ENCODE measurements at regions of chr2 and their contacts with region 1.

Region 1: DNA sequence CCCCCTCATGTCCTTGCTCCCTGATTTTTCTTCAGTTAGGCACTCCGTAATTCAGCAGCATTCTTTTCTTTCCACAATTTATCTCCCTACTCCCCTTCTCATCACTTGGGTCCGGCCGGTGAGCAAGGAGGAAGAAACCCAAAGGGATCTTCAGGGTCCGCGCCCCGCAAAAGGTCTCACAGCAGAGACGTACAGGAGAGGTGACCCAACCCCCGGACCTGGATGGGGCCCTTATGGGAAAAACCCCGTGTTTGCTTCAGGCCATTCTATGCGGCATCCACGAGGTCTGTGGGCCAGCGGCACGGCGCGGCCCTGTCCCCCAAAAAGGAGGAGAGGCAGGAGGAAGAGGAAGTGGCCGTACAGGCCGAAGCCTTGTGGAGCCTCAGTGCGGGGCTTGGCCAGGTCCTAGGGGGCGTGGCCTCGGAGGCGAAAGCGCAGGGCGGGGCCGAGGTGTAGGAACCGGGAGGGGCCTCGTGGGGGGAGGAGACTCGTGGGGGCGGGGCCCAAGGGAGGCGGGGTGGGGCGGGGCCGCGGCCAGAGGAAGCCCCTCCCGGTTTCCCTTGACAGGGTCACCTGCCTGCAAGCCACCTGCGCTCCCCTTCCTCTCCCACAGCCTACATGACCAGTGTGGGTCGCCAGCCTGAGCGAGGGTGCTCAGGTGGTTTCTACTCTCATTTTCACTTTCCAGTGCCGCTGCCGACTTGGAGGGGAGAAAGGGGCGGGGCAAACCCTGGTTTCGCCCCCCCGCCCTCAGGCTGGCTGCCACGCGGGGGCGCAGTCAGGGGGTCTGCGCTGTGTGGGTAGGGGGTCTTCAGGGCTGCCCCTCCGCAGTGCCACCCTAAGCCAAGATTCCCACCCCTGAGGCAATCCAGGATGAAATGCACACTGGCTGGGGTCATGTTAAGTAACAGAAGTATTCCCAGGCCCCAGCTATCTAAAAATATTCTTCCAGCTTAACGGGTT is 156.4 kb upstream of the XPO1 start:
- DNase-seq: peak; percentile 86
- ATAC-seq: peak; percentile 98
- H3K4me3 Mint-ChIP-seq: peak overlapping the region; percentile 94
- H3K27ac Mint-ChIP-seq: peak overlapping the region; percentile 92
- H3K4me1 Mint-ChIP-seq: peaks cover 11% of the 10 kb centered on the region
- H3K27me3 Mint-ChIP-seq: no peaks in the 10 kb centered on the region
- CTCF ChIP-seq: no peak

Region 2: GRCh38 chr2:61029533-61029932 is 665.1 kb before region 1 on chr2:
- CTCF ChIA-PET with region 1: no interaction called
- POLR2A ChIA-PET with region 1: no interaction called
- intact Hi-C with region 1: no loop called
- DNase-seq: no peak
- ATAC-seq: no peak
- H3K4me3 Mint-ChIP-seq: no peak overlapping the region
- H3K27ac Mint-ChIP-seq: no peak overlapping the region
- H3K4me1 Mint-ChIP-seq: peaks cover 3% of the 10 kb centered on the region
- H3K27me3 Mint-ChIP-seq: no peaks in the 10 kb centered on the region
- CTCF ChIP-seq: no peak

Region 3: DNA sequence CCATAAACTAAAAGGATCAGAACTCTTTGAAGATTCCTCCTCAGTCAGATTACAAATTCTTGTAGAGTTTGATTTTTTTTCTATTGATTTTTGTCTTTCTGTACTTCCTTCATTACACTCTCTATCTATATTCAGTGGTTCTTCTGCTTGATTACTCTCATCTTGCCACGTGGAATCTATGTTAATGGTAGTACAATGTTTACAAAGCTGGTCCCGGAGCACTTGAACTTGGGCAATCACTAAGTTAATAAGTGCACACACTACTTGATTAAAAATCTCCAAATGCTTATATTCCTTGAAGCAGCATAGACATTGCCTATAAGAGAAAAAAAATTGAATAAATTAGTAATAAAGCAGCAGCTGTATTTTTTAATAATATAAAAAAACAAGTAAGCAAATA is 288.8 kb before region 1 on chr2:
- CTCF ChIA-PET with region 1: no interaction called
- POLR2A ChIA-PET with region 1: no interaction called
- intact Hi-C with region 1: no loop called
- DNase-seq: no peak
- ATAC-seq: no peak
- H3K4me3 Mint-ChIP-seq: no peak overlapping the region
- H3K27ac Mint-ChIP-seq: no peak overlapping the region
- H3K4me1 Mint-ChIP-seq: peaks cover 8% of the 10 kb centered on the region
- H3K27me3 Mint-ChIP-seq: no peaks in the 10 kb centered on the region
- CTCF ChIP-seq: no peak

Region 4: GRCh38 chr2:61470965-61471904 is 223.4 kb before region 1 on chr2 and contains the start of gene USP34:
- CTCF ChIA-PET with region 1: no interaction called
- POLR2A ChIA-PET with region 1: no interaction called
- intact Hi-C with region 1: loop called (anchors 1 kb)
- DNase-seq: peak; percentile 79
- ATAC-seq: peak; percentile 82
- H3K4me3 Mint-ChIP-seq: peak within 1 kb of the TSS; percentile 95
- H3K27ac Mint-ChIP-seq: peak within 1 kb of the TSS; percentile 95
- H3K4me1 Mint-ChIP-seq: peaks cover 38% of the 10 kb centered on the region
- H3K27me3 Mint-ChIP-seq: no peaks in the 10 kb centered on the region
- CTCF ChIP-seq: no peak
- total RNA-seq, gene USP34: 142 and 176 TPM in 2 replicates

Region 5: DNA sequence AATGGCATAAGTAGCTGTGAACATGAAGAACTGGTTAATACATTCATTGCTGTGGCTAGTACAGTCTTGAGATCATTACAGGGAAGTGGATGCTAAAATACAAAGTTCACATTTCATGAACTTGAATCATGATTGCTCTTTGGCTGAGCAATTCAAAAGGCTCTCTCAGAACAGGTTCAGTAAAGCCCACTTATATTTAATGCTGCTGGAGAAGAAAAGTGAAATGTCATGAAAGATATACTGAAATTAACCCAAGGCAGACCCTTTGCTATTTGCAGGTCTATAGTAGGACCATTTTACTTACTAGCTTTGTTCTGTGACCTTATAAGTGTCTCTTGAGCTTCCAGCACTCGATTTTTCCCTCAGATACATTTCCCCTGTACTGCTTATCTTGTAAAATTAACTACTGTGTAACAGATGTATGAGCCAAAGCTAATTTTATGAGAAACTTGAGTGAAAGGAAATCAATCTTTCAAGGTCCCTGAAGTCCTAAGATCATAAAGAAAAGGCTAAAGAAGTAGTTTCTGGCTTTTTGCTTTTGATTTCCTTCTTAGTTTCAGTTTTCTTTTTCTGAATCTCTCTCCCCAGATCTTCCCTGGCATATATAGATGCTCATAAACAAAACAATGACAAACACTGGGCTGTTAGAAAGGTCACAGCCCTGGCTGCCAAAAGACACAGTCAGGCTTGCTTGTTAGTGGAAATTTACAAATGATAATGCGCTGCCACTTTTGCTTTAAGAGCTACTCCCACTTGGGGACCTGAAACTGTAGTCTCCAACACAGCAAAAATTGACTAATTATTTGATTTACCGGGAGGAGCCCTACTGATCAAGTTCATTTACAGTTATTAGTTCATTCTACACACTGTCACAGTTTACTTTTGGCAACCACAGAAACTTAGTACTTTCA is 23.7 kb before region 1 on chr2:
- CTCF ChIA-PET with region 1: no interaction called
- POLR2A ChIA-PET with region 1: no interaction called
- intact Hi-C with region 1: no loop called
- DNase-seq: no peak
- ATAC-seq: no peak
- H3K4me3 Mint-ChIP-seq: peak overlapping the region; percentile 70
- H3K27ac Mint-ChIP-seq: peak overlapping the region; percentile 79
- H3K4me1 Mint-ChIP-seq: peaks cover 17% of the 10 kb centered on the region
- H3K27me3 Mint-ChIP-seq: no peaks in the 10 kb centered on the region
- CTCF ChIP-seq: no peak

Region 6: DNA sequence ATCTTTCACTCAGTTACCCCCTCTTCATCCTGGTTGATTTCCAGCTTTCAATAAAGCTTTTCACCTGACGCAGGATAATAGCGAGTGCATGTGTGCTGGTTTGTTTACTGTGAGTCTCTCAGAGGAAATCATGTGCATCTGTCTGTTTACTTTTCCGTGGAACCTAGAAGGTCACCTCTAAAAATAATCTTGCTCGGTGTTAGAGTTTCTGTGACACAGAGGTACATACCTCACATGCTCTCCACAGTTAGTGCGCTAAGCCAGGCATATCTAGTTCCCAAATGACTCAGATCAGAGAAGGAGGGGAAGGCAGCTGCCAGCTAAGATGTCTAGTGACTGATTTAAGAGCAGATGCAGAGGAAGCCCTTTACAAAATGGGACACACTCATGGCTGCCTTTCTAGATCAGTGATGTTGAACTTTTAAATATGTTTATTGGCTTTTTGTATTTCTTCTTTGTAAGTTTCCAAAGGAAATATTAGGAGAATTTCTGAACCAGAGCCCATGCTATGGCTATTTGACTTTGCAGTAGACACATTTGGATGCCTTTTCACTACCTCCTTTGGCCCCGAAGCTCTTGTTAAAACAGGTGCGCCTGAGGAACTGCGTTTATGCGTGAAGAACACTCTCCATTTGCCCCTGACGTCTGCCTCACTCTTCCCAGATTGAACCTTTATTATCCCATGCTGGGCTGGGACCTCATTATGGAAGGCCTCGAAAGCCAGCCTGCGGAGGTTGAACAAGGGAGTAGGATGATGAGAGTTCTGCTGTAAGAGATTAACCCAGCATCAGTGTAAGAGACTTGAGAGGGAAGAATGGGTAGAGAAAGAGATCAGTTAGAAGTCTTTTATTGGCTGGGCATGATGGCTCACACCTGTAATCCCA is 13.6 kb after region 1 on chr2:
- CTCF ChIA-PET with region 1: no interaction called
- POLR2A ChIA-PET with region 1: interaction called, 3 read pairs
- intact Hi-C with region 1: loop called (anchors 1 kb)
- DNase-seq: no peak
- ATAC-seq: peak; percentile 96
- H3K4me3 Mint-ChIP-seq: no peak overlapping the region
- H3K27ac Mint-ChIP-seq: peak overlapping the region; percentile 38
- H3K4me1 Mint-ChIP-seq: peaks cover 8% of the 10 kb centered on the region
- H3K27me3 Mint-ChIP-seq: no peaks in the 10 kb centered on the region
- CTCF ChIP-seq: no peak

Region 7: DNA sequence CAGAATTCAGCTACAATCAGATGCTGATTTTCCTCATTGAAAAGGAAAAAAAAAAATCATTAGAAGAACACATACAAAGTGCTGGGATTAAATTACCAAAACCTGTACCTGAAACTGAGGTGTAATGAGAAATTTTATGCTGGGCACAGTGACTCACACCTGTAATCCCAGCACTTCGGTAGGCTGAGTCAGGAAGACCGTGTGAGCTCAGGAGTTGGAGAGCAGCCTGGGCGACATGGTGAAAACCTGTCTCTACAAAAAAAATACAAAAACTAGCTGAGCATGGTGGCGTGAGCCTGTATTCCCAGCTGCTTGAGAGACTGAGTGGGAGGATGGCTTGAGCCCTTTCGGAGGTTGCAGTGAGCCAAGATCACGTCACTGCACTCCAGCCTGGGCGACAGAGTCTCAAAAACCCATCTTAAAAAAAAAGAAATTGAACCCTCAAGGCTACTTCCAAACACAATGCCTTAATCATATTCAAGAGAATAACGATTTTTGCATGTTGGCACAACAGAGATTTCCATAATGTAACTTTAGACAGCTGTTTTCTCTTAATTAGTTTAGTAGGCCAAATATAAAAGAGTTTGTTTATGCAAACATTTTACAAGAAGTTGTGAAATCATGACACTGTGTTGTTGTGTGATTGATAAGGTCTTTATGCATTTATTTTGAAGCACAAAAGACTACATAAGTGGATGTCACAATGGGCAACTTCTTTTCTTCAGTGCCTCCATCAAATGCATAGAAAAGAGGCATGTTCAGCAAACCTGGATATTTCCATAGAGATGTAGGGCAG is 95.4 kb after region 1 on chr2:
- CTCF ChIA-PET with region 1: no interaction called
- POLR2A ChIA-PET with region 1: interaction called, 3 read pairs
- intact Hi-C with region 1: loop called (anchors 1 kb)
- DNase-seq: no peak
- ATAC-seq: no peak
- H3K4me3 Mint-ChIP-seq: no peak overlapping the region
- H3K27ac Mint-ChIP-seq: no peak overlapping the region
- H3K4me1 Mint-ChIP-seq: peaks cover 5% of the 10 kb centered on the region
- H3K27me3 Mint-ChIP-seq: peaks cover 9% of the 10 kb centered on the region
- CTCF ChIP-seq: no peak

Region 8: GRCh38 chr2:61905372-61906185 is 211.0 kb after region 1 on chr2 and contains the start of gene COMMD1:
- CTCF ChIA-PET with region 1: no interaction called
- POLR2A ChIA-PET with region 1: no interaction called
- intact Hi-C with region 1: loop called (anchors 5 kb)
- DNase-seq: peak; percentile 78
- ATAC-seq: peak; percentile 100
- H3K4me3 Mint-ChIP-seq: peak within 1 kb of the TSS; percentile 97
- H3K27ac Mint-ChIP-seq: peak within 1 kb of the TSS; percentile 86
- H3K4me1 Mint-ChIP-seq: peaks cover 11% of the 10 kb centered on the region
- H3K27me3 Mint-ChIP-seq: no peaks in the 10 kb centered on the region
- CTCF ChIP-seq: no peak
- total RNA-seq, gene COMMD1: 36.8 and 37.1 TPM in 2 replicates

Measured in activated B cell treated with CpG ODN at 0.5 μM for 24 hours (primary cell).